ENCODE measurements at regions of chr19 and their contacts with region 1.

Region 1: GRCh38 chr19:47745010-47745901 is at the start of gene NOP53:
- DNase-seq: peak; percentile 89
- H3K27ac ChIP-seq: peak within 1 kb of the TSS; percentile 99
- CTCF ChIP-seq: no peak

Region 2: DNA sequence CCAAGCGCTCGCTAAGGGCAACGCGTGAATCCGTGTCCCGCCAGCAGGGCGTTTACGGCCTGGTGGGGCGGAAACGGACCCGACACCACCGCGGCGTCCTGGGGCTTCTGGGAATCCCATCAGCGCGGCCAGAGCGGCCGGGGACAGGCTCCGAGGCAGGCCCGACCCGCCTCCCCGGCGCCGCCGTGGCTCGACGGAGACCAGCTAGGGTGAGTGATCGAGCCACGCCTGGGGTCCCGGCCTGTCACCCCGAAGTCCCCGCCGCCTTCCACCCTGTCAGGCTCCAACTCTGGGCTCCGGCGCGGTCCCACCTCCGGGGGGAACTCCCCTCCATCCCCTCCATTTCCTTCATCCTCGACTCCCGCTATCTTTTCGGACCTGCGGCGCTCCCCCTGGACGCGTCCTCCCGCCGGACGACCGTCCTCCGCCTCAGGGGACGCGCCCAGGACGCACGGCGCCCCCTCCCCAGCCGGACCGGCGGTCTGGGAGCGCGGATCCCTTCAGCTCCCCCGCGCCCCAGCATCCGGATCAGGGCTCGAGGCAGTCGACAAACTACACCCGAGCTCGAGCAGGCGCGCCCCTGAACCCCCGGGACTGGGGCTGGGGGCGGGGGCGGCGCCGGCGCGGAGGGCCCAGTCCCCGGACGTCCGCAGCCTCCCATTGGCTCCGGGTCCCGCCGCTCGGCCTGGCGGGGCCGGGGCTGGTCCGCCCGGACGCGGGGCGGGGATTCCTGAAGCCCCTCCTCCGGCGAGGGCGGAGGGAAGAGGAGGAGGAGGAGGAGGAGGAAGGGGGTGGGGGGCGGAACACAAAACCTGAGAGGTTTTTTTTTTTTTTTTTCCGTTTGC is 137.0 kb before region 1 on chr19:
- CTCF ChIA-PET with region 1: no interaction called
- POLR2A ChIA-PET with region 1: no interaction called
- DNase-seq: peak; percentile 93
- H3K27ac ChIP-seq: peak overlapping the region; percentile 91
- CTCF ChIP-seq: no peak

Region 3: DNA sequence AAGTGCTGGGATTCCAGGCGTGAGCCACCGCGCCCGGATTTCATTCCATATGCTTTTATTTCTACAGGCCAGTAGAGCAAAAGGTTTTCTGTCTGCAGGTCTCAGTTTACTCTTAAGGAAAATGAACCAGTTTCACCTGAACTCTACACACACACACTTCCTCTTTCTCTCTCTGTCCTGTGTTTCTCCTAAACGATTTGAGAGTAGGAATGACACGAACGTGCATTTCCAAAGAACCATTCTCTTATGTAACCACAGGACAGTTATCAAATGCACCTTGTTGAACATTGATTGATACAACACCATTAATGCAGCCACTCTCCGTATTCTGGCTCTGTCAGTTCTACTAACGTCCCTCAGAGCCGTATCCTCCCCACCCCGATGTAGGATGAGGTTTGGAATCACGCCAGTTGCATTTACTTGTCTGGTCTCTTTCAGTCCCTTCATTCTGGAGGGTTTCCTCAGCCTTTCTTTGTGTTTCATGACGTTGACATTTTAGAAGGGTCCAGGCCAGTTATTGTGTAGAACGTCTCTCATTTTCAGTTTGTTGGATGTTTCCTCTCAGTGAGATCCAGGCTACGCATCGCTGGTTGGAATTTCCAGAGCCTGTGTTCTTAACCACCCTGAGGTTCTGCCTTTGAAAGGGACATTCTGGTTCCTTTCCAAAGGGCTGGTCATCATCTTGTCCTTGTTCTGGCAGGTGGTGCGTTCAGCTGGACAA is 100.3 kb before region 1 on chr19:
- CTCF ChIA-PET with region 1: no interaction called
- POLR2A ChIA-PET with region 1: no interaction called
- DNase-seq: no peak
- H3K27ac ChIP-seq: 0 out of 2 replicates have a peak overlapping the region, but pooled peaks have one; percentile 24
- CTCF ChIP-seq: no peak

Region 4: DNA sequence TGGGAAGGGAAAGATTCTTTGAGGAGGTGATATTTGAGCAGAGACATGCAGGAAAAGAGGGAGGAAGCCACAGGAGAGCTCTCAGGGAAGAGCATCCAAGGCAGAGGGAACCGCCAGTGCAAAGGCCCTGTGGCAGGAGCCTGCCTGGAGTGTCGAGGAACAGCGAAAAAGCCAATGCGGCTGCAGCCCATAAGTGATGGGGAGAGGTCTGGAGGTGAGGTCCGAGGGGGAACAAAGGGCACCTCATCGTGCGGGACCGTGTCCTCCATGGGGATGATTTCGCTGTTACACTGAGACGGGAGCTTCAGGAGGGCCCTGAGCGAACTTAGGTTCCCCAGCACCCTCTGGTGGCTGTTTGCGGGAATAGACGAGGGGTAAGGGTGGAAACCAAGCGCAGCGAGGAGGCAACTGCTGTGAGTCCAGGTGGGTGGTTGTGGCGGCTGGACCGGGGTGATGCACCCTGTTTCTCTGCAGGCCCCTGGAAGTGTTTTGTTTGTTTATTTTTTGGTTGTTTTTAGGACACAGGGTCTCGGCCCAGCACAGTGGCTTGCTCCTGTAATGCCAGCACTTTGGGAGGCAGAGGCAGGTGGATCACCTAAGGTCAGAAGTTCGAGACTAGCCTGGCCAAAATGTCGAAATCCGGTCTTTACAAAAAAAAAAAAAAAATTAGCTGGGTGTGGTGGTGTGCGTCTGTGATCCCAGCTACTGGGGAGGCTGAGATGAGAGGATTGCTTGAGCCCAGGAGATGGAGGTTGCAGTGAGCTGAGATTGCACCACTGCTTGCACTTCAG is 37.9 kb before region 1 on chr19:
- CTCF ChIA-PET with region 1: interaction called, 59 read pairs
- POLR2A ChIA-PET with region 1: no interaction called
- DNase-seq: peak; percentile 60
- H3K27ac ChIP-seq: no peak overlapping the region
- CTCF ChIP-seq: peak; percentile 82

Measured in RWPE1 (cell line).